ENCODE measurements at regions of chr19 and their contacts with region 1.

Region 1: GRCh38 chr19:22595422-22595821 is 38.7 kb upstream of the ZNF492 start:
- DNase-seq: no peak
- H3K4me3 ChIP-seq: no peak overlapping the region
- H3K27ac ChIP-seq: no peak overlapping the region
- H3K4me1 ChIP-seq: no peaks in the 10 kb centered on the region
- H3K27me3 ChIP-seq: no peaks in the 10 kb centered on the region
- CTCF ChIP-seq: no peak

Region 2: GRCh38 chr19:21740559-21740958 is 854.9 kb before region 1 on chr19:
- CTCF ChIA-PET with region 1: interaction called, 17 read pairs
- POLR2A ChIA-PET with region 1: no interaction called
- intact Hi-C with region 1: no loop called
- DNase-seq: no peak
- H3K4me3 ChIP-seq: no peak overlapping the region
- H3K27ac ChIP-seq: no peak overlapping the region
- H3K4me1 ChIP-seq: no peaks in the 10 kb centered on the region
- H3K27me3 ChIP-seq: no peaks in the 10 kb centered on the region
- CTCF ChIP-seq: no peak

Measured in PC-9 (cell line).